Gastrocnemius medialis (tissue), 4 donors: ENCODE measurements at regions of chr12 and their contacts with region 1.

Region 1: GRCh38 chr12:68610370-68611093 is at the start of gene RAP1B:
- DNase-seq: peak; percentile 77 to 88
- ATAC-seq: peak; percentile 91 to 92
- H3K4me3 ChIP-seq: peak within 1 kb of the TSS; percentile 82 to 99 (median 94)
- H3K27ac ChIP-seq: peak within 1 kb of the TSS; percentile 97 to 99 (median 98)
- H3K4me1 ChIP-seq: peaks cover 34 to 39% of the 10 kb centered on the region in 2 donors
- H3K27me3 ChIP-seq: no peaks in the 10 kb centered on the region
- CTCF ChIP-seq: no peak
- POLR2A ChIP-seq: peak; percentile 94
- total RNA-seq, gene RAP1B: 58.4 to 93.8 (median 71.9) TPM

Region 2: GRCh38 chr12:68331869-68332727 is 278.4 kb before region 1 on chr12 and contains the start of gene MDM1:
- in situ Hi-C with region 1: no loop called
- intact Hi-C with region 1: loop called (anchors 1 kb)
- DNase-seq: peak; percentile 96 to 97
- ATAC-seq: peak; percentile 100
- H3K4me3 ChIP-seq: peak within 1 kb of the TSS; percentile 71 to 87 (median 84)
- H3K27ac ChIP-seq: peak within 1 kb of the TSS; percentile 41 to 71 (median 69)
- H3K4me1 ChIP-seq: peaks cover 0 to 8% of the 10 kb centered on the region in 2 donors
- H3K27me3 ChIP-seq: no peaks in the 10 kb centered on the region
- CTCF ChIP-seq: peak in 1 of 5 experiments; percentile 6
- POLR2A ChIP-seq: peak in 1 of 2 donors; percentile 33
- total RNA-seq, gene MDM1: 1.6 to 6.8 (median 3.4) TPM

Region 3: GRCh38 chr12:68358532-68359485 is 251.7 kb before region 1 on chr12:
- in situ Hi-C with region 1: loop called in 1 of 4 experiments (anchors 10 kb)
- intact Hi-C with region 1: loop called (anchors 2 kb)
- DNase-seq: peak; percentile 28 to 49
- ATAC-seq: peak; percentile 96
- H3K4me3 ChIP-seq: no peak overlapping the region
- H3K27ac ChIP-seq: peak overlapping the region in 3 of 4 donors; percentile 1 to 36 (median 25)
- H3K4me1 ChIP-seq: peaks cover 10 to 14% of the 10 kb centered on the region in 2 donors
- H3K27me3 ChIP-seq: no peaks in the 10 kb centered on the region
- CTCF ChIP-seq: peak; percentile 46 to 75 (median 69)
- POLR2A ChIP-seq: no peak

Region 4: DNA sequence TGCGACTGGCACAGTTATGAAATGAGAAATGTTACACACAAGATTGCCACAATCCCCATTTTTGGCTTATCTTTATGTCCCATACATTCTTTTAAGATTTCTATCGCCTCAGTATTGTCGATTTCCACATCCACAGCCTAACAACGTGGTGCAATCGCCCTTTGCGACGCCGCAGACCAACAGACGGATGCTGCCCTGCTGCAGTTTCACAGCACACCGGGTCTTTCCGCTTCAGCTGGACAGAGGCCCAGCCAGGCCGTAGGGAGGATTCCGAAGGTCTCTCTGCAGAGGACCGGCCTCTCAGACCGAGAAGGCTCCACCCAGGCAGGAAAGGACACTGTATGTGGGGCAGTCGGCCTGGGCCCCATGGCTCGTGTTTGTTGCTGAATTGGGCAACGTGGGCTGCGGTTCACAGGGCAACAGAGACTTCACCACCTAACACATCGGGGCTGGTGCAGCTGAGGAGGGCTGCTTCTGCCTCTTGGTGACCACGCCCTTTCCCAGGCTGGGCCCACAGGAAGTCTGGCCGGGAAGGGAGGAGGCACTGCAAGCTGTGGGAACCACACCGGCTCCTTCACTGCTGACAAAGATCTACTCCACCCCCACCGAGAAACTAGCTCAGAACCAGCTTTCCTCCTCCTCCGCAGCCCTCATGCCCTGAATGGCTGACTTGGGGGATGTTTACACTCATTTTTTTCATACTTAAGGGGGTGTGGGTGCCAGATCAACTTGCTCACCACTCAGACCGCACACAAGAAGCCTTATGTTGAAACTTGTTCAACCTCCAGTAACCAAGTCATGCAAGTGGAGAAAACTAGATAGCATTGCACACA is 245.4 kb before region 1 on chr12:
- in situ Hi-C with region 1: loop called in 1 of 4 experiments (anchors 10 kb)
- intact Hi-C with region 1: loop called (anchors 2 kb)
- DNase-seq: peak; percentile 72 to 85
- ATAC-seq: peak; percentile 64 to 88
- H3K4me3 ChIP-seq: peak overlapping the region; percentile 33 to 49 (median 40)
- H3K27ac ChIP-seq: peak overlapping the region; percentile 63 to 72 (median 68)
- H3K4me1 ChIP-seq: peaks cover 5 to 14% of the 10 kb centered on the region in 2 donors
- H3K27me3 ChIP-seq: no peaks in the 10 kb centered on the region
- CTCF ChIP-seq: no peak
- POLR2A ChIP-seq: no peak

Region 5: DNA sequence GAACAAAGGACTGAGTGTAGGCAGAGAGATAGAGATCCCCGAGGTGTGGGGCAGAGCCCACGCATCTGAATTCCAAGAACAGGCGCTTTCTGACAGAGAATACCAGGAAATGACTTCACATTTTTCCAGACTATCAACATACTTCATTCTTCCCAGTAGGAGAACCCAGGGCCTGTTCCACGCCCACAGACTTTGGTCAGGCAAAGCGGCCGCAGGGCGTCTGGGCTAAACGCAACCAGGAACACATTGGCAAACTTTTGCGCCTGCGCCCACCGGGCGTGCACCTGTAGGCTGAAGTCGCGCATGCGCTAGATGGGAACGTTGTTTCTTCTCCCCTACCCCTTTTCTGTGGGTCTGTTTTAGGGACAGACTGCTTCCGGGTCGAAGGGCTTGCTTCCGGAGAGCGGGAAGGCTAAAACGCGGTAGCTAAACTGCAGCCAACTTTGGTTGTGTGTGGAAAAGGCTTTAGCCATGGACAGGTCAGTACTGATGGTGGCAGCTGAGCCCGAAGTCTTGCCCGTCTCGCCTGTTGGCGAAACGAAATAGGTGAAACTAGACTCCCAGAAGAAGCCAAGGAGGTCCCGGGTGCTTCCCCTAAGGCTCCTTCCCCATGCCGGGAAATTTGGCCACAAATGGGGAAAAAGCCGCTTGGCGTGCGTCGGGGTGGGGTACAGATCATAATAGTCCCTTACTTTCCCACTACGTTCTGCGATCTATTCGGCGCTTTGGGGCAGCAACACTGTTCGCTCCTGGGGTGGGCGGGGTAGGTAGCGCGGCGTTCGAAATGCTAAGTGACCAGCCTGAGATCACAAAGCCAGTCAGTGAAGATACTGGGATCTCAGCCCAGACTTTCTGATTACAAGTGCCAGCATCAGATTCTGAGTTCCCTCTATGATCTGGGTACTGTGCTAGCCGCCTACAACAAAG is 76.3 kb after region 1 on chr12 and contains the start of gene NUP107:
- in situ Hi-C with region 1: no loop called
- intact Hi-C with region 1: loop called (anchors 1 kb)
- DNase-seq: peak; percentile 96 to 97
- ATAC-seq: peak; percentile 100
- H3K4me3 ChIP-seq: peak within 1 kb of the TSS; percentile 87 to 100 (median 96)
- H3K27ac ChIP-seq: peak within 1 kb of the TSS; percentile 70 to 87 (median 86)
- H3K4me1 ChIP-seq: peaks cover 13 to 18% of the 10 kb centered on the region in 2 donors
- H3K27me3 ChIP-seq: no peaks in the 10 kb centered on the region
- CTCF ChIP-seq: peak in 3 of 5 experiments; percentile 9 to 18 (median 16)
- POLR2A ChIP-seq: peak; percentile 16 to 37
- total RNA-seq, gene NUP107: 13.0 to 43.1 (median 25.9) TPM

Region 6: GRCh38 chr12:68745904-68746571 is 135.5 kb after region 1 on chr12 and contains the start of gene SLC35E3:
- in situ Hi-C with region 1: no loop called
- intact Hi-C with region 1: loop called (anchors 2 kb)
- DNase-seq: peak; percentile 85 to 90
- ATAC-seq: peak; percentile 95 to 96
- H3K4me3 ChIP-seq: peak within 1 kb of the TSS; percentile 63 to 92 (median 79)
- H3K27ac ChIP-seq: peak within 1 kb of the TSS; percentile 63 to 84 (median 80)
- H3K4me1 ChIP-seq: peaks cover 21 to 26% of the 10 kb centered on the region in 2 donors
- H3K27me3 ChIP-seq: no peaks in the 10 kb centered on the region
- CTCF ChIP-seq: no peak
- POLR2A ChIP-seq: peak; percentile 54 to 69
- total RNA-seq, gene SLC35E3: 0.92 to 2.7 (median 1.6) TPM

Region 7: GRCh38 chr12:68807576-68808387 is 197.2 kb after region 1 on chr12 and contains the start of gene MDM2:
- in situ Hi-C with region 1: no loop called
- intact Hi-C with region 1: loop called (anchors 5 kb)
- DNase-seq: peak; percentile 87 to 93
- ATAC-seq: peak; percentile 85 to 91
- H3K4me3 ChIP-seq: peak within 1 kb of the TSS; percentile 88 to 98 (median 96)
- H3K27ac ChIP-seq: peak within 1 kb of the TSS; percentile 97 to 99 (median 98)
- H3K4me1 ChIP-seq: peaks cover 0 to 13% of the 10 kb centered on the region in 2 donors
- H3K27me3 ChIP-seq: no peaks in the 10 kb centered on the region
- CTCF ChIP-seq: peak; percentile 81 to 91 (median 86)
- POLR2A ChIP-seq: peak; percentile 84 to 90
- total RNA-seq, gene MDM2: 61.6 to 92.2 (median 70.0) TPM